Prostate gland (tissue), 2 donors: ENCODE measurements at regions of chr10 and their contacts with region 1.

Region 1: GRCh38 chr10:101818119-101818871 is at the start of gene OGA:
- DNase-seq: peak; percentile 98
- H3K4me3 ChIP-seq: peak within 1 kb of the TSS; percentile 99 to 100
- H3K27ac ChIP-seq: peak within 1 kb of the TSS; percentile 96 to 97
- H3K4me1 ChIP-seq: peaks cover 5% of the 10 kb centered on the region
- H3K27me3 ChIP-seq: no peaks in the 10 kb centered on the region
- CTCF ChIP-seq: peak in 1 of 4 experiments; percentile 9
- POLR2A ChIP-seq: peak; percentile 98
- total RNA-seq, gene OGA: 82.5 to 143 TPM

Region 2: DNA sequence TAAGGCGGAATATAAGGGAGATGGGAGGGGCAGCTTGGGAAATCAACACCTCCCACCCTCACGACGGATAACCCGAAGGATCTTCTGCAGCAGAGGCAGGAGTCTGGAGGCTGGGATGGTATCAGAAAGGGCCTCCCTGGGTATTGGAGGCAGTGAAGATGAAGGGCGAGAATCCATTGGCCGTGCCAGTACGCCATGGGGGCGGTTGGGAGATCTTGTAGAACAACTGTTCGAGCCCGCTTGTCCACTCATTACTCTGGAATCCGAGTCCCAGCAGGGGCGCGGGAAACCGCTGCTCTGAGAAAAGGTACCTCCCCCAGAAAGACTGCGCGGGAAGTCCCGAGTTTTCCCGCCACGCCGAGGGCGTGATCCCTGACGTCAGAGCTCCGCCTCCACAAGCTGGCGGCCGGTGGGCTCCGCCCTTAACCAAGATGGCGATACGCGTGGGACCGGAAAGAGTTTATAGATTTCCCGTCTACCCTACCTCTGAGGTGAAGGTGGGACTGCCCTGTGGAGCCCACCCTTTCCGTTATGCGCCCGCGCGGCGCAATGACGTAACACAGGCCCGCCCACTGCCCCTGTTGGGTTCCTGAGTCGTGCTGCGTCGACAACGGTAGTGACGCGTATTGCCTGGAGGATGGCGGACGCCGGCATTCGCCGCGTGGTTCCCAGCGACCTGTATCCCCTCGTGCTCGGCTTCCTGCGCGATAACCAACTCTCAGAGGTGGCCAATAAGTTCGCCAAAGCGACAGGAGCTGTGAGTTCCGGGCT is 333.7 kb after region 1 on chr10 and contains the start of gene NOLC1:
- intact Hi-C with region 1: loop called (anchors 5 kb)
- DNase-seq: peak; percentile 99
- H3K4me3 ChIP-seq: peak within 1 kb of the TSS; percentile 80 to 84
- H3K27ac ChIP-seq: peak within 1 kb of the TSS; percentile 80 to 82
- H3K4me1 ChIP-seq: peaks cover 5% of the 10 kb centered on the region
- H3K27me3 ChIP-seq: no peaks in the 10 kb centered on the region
- CTCF ChIP-seq: peak in 1 of 4 experiments; percentile 25
- POLR2A ChIP-seq: peak; percentile 50
- total RNA-seq, gene NOLC1: 50.3 to 67.9 TPM